Activated B cell treated with CpG ODN at 0.5 μM for 24 hours (primary cell): ENCODE measurements at regions of chr10 and their contacts with region 1.

Region 1: GRCh38 chr10:106863549-106863948 is 301.0 kb downstream of the SORCS1 start:
- DNase-seq: no peak
- ATAC-seq: no peak
- H3K4me3 Mint-ChIP-seq: no peak overlapping the region
- H3K27ac Mint-ChIP-seq: no peak overlapping the region
- H3K4me1 Mint-ChIP-seq: no peaks in the 10 kb centered on the region
- H3K27me3 Mint-ChIP-seq: no peaks in the 10 kb centered on the region
- CTCF ChIP-seq: no peak

Region 2: GRCh38 chr10:106513352-106513771 is 350.2 kb before region 1 on chr10:
- CTCF ChIA-PET with region 1: no interaction called
- POLR2A ChIA-PET with region 1: no interaction called
- intact Hi-C with region 1: no loop called
- DNase-seq: no peak
- ATAC-seq: no peak
- H3K4me3 Mint-ChIP-seq: no peak overlapping the region
- H3K27ac Mint-ChIP-seq: no peak overlapping the region
- H3K4me1 Mint-ChIP-seq: no peaks in the 10 kb centered on the region
- H3K27me3 Mint-ChIP-seq: no peaks in the 10 kb centered on the region
- CTCF ChIP-seq: no peak

Region 3: GRCh38 chr10:106894692-106895091 is 31.1 kb after region 1 on chr10:
- CTCF ChIA-PET with region 1: no interaction called
- POLR2A ChIA-PET with region 1: interaction called, 10 read pairs
- intact Hi-C with region 1: no loop called
- DNase-seq: no peak
- ATAC-seq: no peak
- H3K4me3 Mint-ChIP-seq: no peak overlapping the region
- H3K27ac Mint-ChIP-seq: no peak overlapping the region
- H3K4me1 Mint-ChIP-seq: no peaks in the 10 kb centered on the region
- H3K27me3 Mint-ChIP-seq: no peaks in the 10 kb centered on the region
- CTCF ChIP-seq: no peak